ENCODE measurements at regions of chr14 and their contacts with region 1.

Region 1: GRCh38 chr14:20413045-20413799 is at the start of gene TEP1:
- DNase-seq: peak; percentile 62
- ATAC-seq: peak; percentile 93
- H3K4me3 ChIP-seq: peak within 1 kb of the TSS; percentile 81 to 93 (median 92)
- H3K27ac ChIP-seq: peak within 1 kb of the TSS; percentile 63
- H3K4me1 ChIP-seq: peaks cover 47% of the 10 kb centered on the region
- H3K27me3 ChIP-seq: no peaks in the 10 kb centered on the region; a peak in 2 of 5 replicates
- CTCF ChIP-seq: peak; percentile 35
- EP300 ChIP-seq: 0 out of 4 replicates have a peak, but pooled peaks of 1 of the 2 experiments have one; percentile 3
- POLR2A ChIP-seq: peak; percentile 31 to 84; a peak in 3 of 4 replicates
- RAD21 ChIP-seq: peak; percentile 32; the same call in 1 of the 2 replicates
- total RNA-seq, gene TEP1: 9.5 and 12.8 TPM in 2 replicates

Region 2: GRCh38 chr14:20059745-20060144 is 353.5 kb before region 1 on chr14 and contains the start of gene OR4L1:
- CTCF ChIA-PET with region 1: no interaction called
- POLR2A ChIA-PET with region 1: no interaction called
- in situ Hi-C with region 1: no loop called
- intact Hi-C with region 1: no loop called
- DNase-seq: no peak
- ATAC-seq: no peak
- H3K4me3 ChIP-seq: no peak within 1 kb of the TSS
- H3K27ac ChIP-seq: no peak within 1 kb of the TSS
- H3K4me1 ChIP-seq: no peaks in the 10 kb centered on the region
- H3K27me3 ChIP-seq: no peaks in the 10 kb centered on the region
- CTCF ChIP-seq: no peak
- EP300 ChIP-seq: no peak
- POLR2A ChIP-seq: no peak
- RAD21 ChIP-seq: no peak
- total RNA-seq, gene OR4L1: not detected in 2 replicates

Region 3: DNA sequence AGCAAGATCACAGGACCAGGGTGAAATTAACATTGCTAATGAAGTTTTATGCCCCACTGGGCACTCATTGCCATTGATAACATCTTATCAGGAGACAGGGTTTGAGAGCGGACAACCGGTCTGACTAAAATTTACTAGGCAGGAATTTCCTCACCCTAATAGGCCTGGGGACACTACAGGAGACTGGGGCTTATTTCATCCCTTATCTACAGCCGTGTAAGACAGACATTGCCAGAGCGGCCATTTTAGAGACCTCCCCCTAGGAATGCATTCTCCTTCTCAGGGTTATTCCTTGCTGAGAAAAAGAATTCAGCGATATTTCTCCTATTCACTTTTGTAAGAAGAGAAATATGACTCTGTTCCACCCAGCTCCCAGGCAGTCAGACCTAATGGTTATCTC is 294.4 kb before region 1 on chr14:
- CTCF ChIA-PET with region 1: no interaction called
- POLR2A ChIA-PET with region 1: no interaction called
- in situ Hi-C with region 1: no loop called
- intact Hi-C with region 1: no loop called
- DNase-seq: no peak
- ATAC-seq: no peak
- H3K4me3 ChIP-seq: no peak overlapping the region
- H3K27ac ChIP-seq: no peak overlapping the region
- H3K4me1 ChIP-seq: no peaks in the 10 kb centered on the region
- H3K27me3 ChIP-seq: no peaks in the 10 kb centered on the region
- CTCF ChIP-seq: no peak
- EP300 ChIP-seq: no peak
- POLR2A ChIP-seq: no peak
- RAD21 ChIP-seq: no peak

Region 4: GRCh38 chr14:20327005-20327869 is 86.0 kb before region 1 on chr14:
- CTCF ChIA-PET with region 1: no interaction called
- POLR2A ChIA-PET with region 1: no interaction called
- in situ Hi-C with region 1: no loop called
- intact Hi-C with region 1: loop called (anchors 5 kb)
- DNase-seq: peak; percentile 79
- ATAC-seq: peak; percentile 54; the same call in 2 of the 3 replicates
- H3K4me3 ChIP-seq: no peak overlapping the region
- H3K27ac ChIP-seq: peak overlapping the region; percentile 4
- H3K4me1 ChIP-seq: peaks cover 49% of the 10 kb centered on the region
- H3K27me3 ChIP-seq: no peaks in the 10 kb centered on the region
- CTCF ChIP-seq: peak; percentile 84
- EP300 ChIP-seq: no peak
- POLR2A ChIP-seq: no peak
- RAD21 ChIP-seq: peak; percentile 81

Region 5: GRCh38 chr14:20376071-20376588 is 37.1 kb before region 1 on chr14:
- CTCF ChIA-PET with region 1: no interaction called
- POLR2A ChIA-PET with region 1: interaction called, 5 read pairs
- in situ Hi-C with region 1: no loop called
- intact Hi-C with region 1: loop called (anchors 5 kb)
- DNase-seq: peak; percentile 67
- ATAC-seq: peak; percentile 99
- H3K4me3 ChIP-seq: peak overlapping the region in 2 of 3 experiments; percentile 3 to 17; a peak in 2 of 6 replicates
- H3K27ac ChIP-seq: peak overlapping the region; percentile 71
- H3K4me1 ChIP-seq: peaks cover 19% of the 10 kb centered on the region
- H3K27me3 ChIP-seq: no peaks in the 10 kb centered on the region
- CTCF ChIP-seq: no peak
- EP300 ChIP-seq: no peak
- POLR2A ChIP-seq: peak in 1 of 2 experiments; percentile 58; a peak in 2 of 4 replicates
- RAD21 ChIP-seq: no peak

Region 6: GRCh38 chr14:20427231-20428009 is 14.2 kb after region 1 on chr14:
- CTCF ChIA-PET with region 1: no interaction called
- POLR2A ChIA-PET with region 1: interaction called, 37 read pairs
- in situ Hi-C with region 1: no loop called
- intact Hi-C with region 1: no loop called
- DNase-seq: peak; percentile 68
- ATAC-seq: peak; percentile 76
- H3K4me3 ChIP-seq: peak overlapping the region; percentile 16 to 50 (median 17); a peak in 4 of 6 replicates
- H3K27ac ChIP-seq: peak overlapping the region; percentile 4
- H3K4me1 ChIP-seq: peaks cover 52% of the 10 kb centered on the region
- H3K27me3 ChIP-seq: no peaks in the 10 kb centered on the region
- CTCF ChIP-seq: no peak
- EP300 ChIP-seq: no peak
- POLR2A ChIP-seq: no peak
- RAD21 ChIP-seq: no peak

Region 7: GRCh38 chr14:20454516-20455354 is 41.5 kb after region 1 on chr14 and contains the starts of genes APEX1 and OSGEP:
- CTCF ChIA-PET with region 1: interaction called, 5 read pairs
- POLR2A ChIA-PET with region 1: interaction called, 59 read pairs
- in situ Hi-C with region 1: loop called (anchors 5 kb)
- intact Hi-C with region 1: loop called (anchors 1 kb)
- DNase-seq: peak; percentile 99
- ATAC-seq: peak; percentile 90
- H3K4me3 ChIP-seq: peak within 1 kb of the TSS; percentile 88 to 92 (median 89)
- H3K27ac ChIP-seq: peak within 1 kb of the TSS; percentile 94
- H3K4me1 ChIP-seq: peaks cover 35% of the 10 kb centered on the region
- H3K27me3 ChIP-seq: no peaks in the 10 kb centered on the region; a peak in 1 of 5 replicates
- CTCF ChIP-seq: 0 out of 2 replicates have a peak, but pooled peaks have one; percentile 13
- EP300 ChIP-seq: peak in 1 of 2 experiments; percentile 7; a peak in 2 of 4 replicates
- POLR2A ChIP-seq: peak; percentile 86 to 93
- RAD21 ChIP-seq: peak; percentile 63; the same call in 1 of the 2 replicates
- total RNA-seq, gene APEX1: 171 and 261 TPM in 2 replicates
- total RNA-seq, gene OSGEP: 32.4 and 39.7 TPM in 2 replicates

Region 8: GRCh38 chr14:20469242-20469889 is 56.1 kb after region 1 on chr14 and contains the start of gene PNP:
- CTCF ChIA-PET with region 1: no interaction called
- POLR2A ChIA-PET with region 1: interaction called, 55 read pairs
- in situ Hi-C with region 1: no loop called
- intact Hi-C with region 1: loop called (anchors 1 kb)
- DNase-seq: peak; percentile 88
- ATAC-seq: peak; percentile 97
- H3K4me3 ChIP-seq: peak within 1 kb of the TSS; percentile 54 to 93 (median 74)
- H3K27ac ChIP-seq: peak within 1 kb of the TSS; percentile 53
- H3K4me1 ChIP-seq: peaks cover 52% of the 10 kb centered on the region
- H3K27me3 ChIP-seq: no peaks in the 10 kb centered on the region
- CTCF ChIP-seq: peak; percentile 48
- EP300 ChIP-seq: no peak
- POLR2A ChIP-seq: peak; percentile 100
- RAD21 ChIP-seq: peak; percentile 60; the same call in 1 of the 2 replicates
- total RNA-seq, gene PNP: 74.8 and 117 TPM in 2 replicates

Region 9: DNA sequence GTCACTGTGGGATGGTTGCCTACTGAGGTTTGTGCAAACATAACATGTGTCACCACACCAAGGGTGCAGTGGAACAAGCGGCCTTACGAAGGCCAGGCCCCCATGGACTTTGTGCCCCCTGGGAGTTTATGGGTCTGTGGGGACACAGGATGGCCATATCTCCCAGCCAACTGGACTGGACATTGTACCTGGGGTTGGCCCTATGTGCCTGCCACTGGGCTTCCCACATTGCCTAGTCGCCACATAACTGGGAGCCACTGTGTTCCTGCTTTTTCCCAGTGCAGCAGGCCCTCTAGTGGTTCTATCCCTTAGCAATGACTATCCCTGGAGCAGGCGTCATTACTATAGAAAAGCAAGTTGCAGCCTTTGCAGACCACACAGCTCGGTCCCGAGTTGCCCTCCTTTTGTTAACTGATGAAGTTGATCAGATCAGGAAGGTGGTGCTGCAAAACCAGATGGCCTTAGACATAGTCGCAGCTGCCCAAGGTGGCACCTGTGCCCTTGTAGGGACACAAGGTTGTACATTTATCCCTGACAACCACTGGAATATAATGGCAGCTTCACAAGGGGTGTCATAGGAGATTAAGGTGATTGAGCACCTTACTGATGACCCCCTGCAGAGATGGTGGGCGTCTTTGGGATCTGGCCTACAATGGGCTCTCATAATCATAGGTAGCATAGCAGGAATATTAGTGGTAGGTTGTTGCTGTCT is 193.1 kb after region 1 on chr14:
- CTCF ChIA-PET with region 1: interaction called, 3 read pairs
- POLR2A ChIA-PET with region 1: interaction called, 5 read pairs
- in situ Hi-C with region 1: no loop called
- intact Hi-C with region 1: loop called (anchors 1 kb)
- DNase-seq: peak; percentile 79
- ATAC-seq: peak; percentile 80
- H3K4me3 ChIP-seq: peak overlapping the region; percentile 25 to 59 (median 33); a peak in 5 of 6 replicates
- H3K27ac ChIP-seq: no peak overlapping the region
- H3K4me1 ChIP-seq: peaks cover 53% of the 10 kb centered on the region
- H3K27me3 ChIP-seq: no peaks in the 10 kb centered on the region; a peak in 1 of 5 replicates
- CTCF ChIP-seq: peak; percentile 95
- EP300 ChIP-seq: peak in 1 of 2 experiments; percentile 38; a peak in 1 of 4 replicates
- POLR2A ChIP-seq: no peak
- RAD21 ChIP-seq: peak; percentile 85

Measured in HepG2 (cell line).